ENCODE measurements at regions of chr12 and their contacts with region 1.

Region 1: DNA sequence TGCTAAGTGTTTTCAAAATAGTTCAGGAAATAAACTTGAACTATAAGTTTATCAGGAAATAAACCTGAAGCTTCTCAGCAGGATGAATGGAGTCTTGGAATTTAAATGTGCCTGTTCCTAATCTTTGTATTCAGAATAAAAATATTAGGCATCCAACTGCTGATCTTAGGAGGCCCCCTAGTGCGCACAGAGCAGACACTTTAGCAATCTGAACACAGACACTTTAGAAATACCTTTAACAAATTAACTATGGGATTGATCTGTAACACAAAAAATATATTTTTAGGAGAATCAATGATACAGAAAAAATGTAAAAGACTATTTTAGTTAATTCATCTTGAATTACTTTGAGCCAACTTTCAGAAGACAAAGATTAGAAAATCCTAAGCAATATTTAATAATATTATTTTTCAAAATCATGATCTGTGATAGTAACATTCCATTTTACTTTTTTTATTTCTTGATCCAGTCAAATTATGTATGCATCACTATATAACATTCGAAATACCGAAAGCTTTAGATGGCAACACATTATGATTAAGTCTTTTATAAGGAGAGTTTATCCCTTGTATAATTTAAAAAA is 80.9 kb downstream of the SLC41A2 start:
- DNase-seq: no peak
- H3K4me3 ChIP-seq: no peak overlapping the region
- H3K27ac ChIP-seq: no peak overlapping the region
- H3K27me3 ChIP-seq: no peaks in the 10 kb centered on the region
- CTCF ChIP-seq: peak; percentile 91

Region 2: GRCh38 chr12:104201238-104202001 is 675.8 kb before region 1 on chr12:
- CTCF ChIA-PET with region 1: interaction called, 13 read pairs
- POLR2A ChIA-PET with region 1: no interaction called
- DNase-seq: no peak
- H3K4me3 ChIP-seq: no peak overlapping the region
- H3K27ac ChIP-seq: no peak overlapping the region
- H3K27me3 ChIP-seq: no peaks in the 10 kb centered on the region
- CTCF ChIP-seq: peak; percentile 94

Region 3: GRCh38 chr12:104457746-104458693 is 419.2 kb before region 1 on chr12:
- CTCF ChIA-PET with region 1: interaction called, 10 read pairs
- POLR2A ChIA-PET with region 1: no interaction called
- DNase-seq: no peak
- H3K4me3 ChIP-seq: peak overlapping the region; percentile 78
- H3K27ac ChIP-seq: no peak overlapping the region
- H3K27me3 ChIP-seq: no peaks in the 10 kb centered on the region
- CTCF ChIP-seq: 0 out of 2 replicates have a peak, but pooled peaks have one; percentile 16

Region 4: GRCh38 chr12:104802198-104802597 is 75.0 kb before region 1 on chr12:
- CTCF ChIA-PET with region 1: no interaction called
- POLR2A ChIA-PET with region 1: no interaction called
- DNase-seq: no peak
- H3K4me3 ChIP-seq: no peak overlapping the region
- H3K27ac ChIP-seq: no peak overlapping the region
- H3K27me3 ChIP-seq: peaks cover 3% of the 10 kb centered on the region
- CTCF ChIP-seq: no peak

Region 5: GRCh38 chr12:104865080-104865479 is 12.1 kb before region 1 on chr12:
- CTCF ChIA-PET with region 1: interaction called, 11 read pairs
- POLR2A ChIA-PET with region 1: no interaction called
- DNase-seq: no peak
- H3K4me3 ChIP-seq: no peak overlapping the region
- H3K27ac ChIP-seq: no peak overlapping the region
- H3K27me3 ChIP-seq: no peaks in the 10 kb centered on the region
- CTCF ChIP-seq: no peak